ENCODE measurements at regions of chr1 and their contacts with region 1.

Region 1: GRCh38 chr1:241611063-241611462 is 29.1 kb downstream of the CHML start:
- DNase-seq: peak; percentile 69
- H3K4me3 ChIP-seq: no peak overlapping the region
- H3K27ac ChIP-seq: no peak overlapping the region
- H3K4me1 ChIP-seq: no peaks in the 10 kb centered on the region
- H3K27me3 ChIP-seq: no peaks in the 10 kb centered on the region
- CTCF ChIP-seq: peak; percentile 56

Region 2: GRCh38 chr1:241834733-241835377 is 223.8 kb after region 1 on chr1:
- CTCF ChIA-PET with region 1: no interaction called
- POLR2A ChIA-PET with region 1: no interaction called
- intact Hi-C with region 1: loop called (anchors 5 kb)
- DNase-seq: peak; percentile 39
- H3K4me3 ChIP-seq: no peak overlapping the region
- H3K27ac ChIP-seq: no peak overlapping the region
- H3K4me1 ChIP-seq: no peaks in the 10 kb centered on the region
- H3K27me3 ChIP-seq: no peaks in the 10 kb centered on the region
- CTCF ChIP-seq: peak; percentile 61